Heart left ventricle (tissue), 16 donors: ENCODE measurements at regions of chr3 and their contacts with region 1.

Region 1: GRCh38 chr3:167929968-167930367 is 165.8 kb downstream of the GOLIM4 start:
- DNase-seq: peak in 1 of 5 donors; percentile 24
- ATAC-seq: peak in 3 of 4 donors; percentile 60 to 75 (median 63)
- H3K4me3 ChIP-seq: no peak overlapping the region
- H3K27ac ChIP-seq: no peak overlapping the region
- H3K4me1 ChIP-seq: peaks cover 0 to 10% (median 0%) of the 10 kb centered on the region in 12 donors
- H3K27me3 ChIP-seq: no peaks in the 10 kb centered on the region
- CTCF ChIP-seq: no peak
- POLR2A ChIP-seq: no peak

Region 2: DNA sequence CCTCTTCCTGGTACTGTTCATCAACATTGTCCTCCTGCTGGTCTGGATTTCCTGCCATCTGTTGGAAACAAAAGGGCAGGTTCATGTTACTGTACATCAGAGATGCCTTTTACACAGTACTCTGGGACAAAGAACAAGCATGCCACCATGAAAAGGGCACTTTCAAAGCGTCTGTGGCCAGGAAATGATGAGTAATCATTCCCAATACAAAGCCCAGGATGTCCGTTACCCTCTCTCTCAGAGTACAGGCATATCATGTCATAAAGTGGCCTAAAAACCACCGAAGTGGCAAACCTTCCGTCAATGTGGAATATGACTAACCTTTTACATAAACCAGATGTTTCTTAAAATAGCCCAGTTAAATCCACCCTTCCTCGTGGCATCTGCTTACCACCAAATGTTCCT is 94.6 kb after region 1 on chr3:
- intact Hi-C with region 1: loop called in 1 of 10 experiments (anchors 10 kb)
- DNase-seq: peak in 2 of 5 donors; percentile 19 to 44
- ATAC-seq: peak; percentile 79 to 94 (median 86)
- H3K4me3 ChIP-seq: no peak overlapping the region
- H3K27ac ChIP-seq: peak overlapping the region; percentile 4 to 83 (median 78)
- H3K4me1 ChIP-seq: peaks cover 0 to 39% (median 16%) of the 10 kb centered on the region in 12 donors
- H3K27me3 ChIP-seq: no peaks in the 10 kb centered on the region
- CTCF ChIP-seq: no peak
- POLR2A ChIP-seq: no peak

Region 3: GRCh38 chr3:168034152-168034928 is 104.4 kb after region 1 on chr3:
- intact Hi-C with region 1: loop called in 4 of 10 experiments (anchors 2 to 10 kb)
- DNase-seq: peak in 2 of 5 donors; percentile 41 to 51
- ATAC-seq: peak; percentile 65 to 90 (median 88)
- H3K4me3 ChIP-seq: no peak overlapping the region
- H3K27ac ChIP-seq: peak overlapping the region; percentile 19 to 83 (median 66)
- H3K4me1 ChIP-seq: peaks cover 0 to 14% (median 8%) of the 10 kb centered on the region in 12 donors
- H3K27me3 ChIP-seq: no peaks in the 10 kb centered on the region
- CTCF ChIP-seq: no peak
- POLR2A ChIP-seq: no peak

Region 4: DNA sequence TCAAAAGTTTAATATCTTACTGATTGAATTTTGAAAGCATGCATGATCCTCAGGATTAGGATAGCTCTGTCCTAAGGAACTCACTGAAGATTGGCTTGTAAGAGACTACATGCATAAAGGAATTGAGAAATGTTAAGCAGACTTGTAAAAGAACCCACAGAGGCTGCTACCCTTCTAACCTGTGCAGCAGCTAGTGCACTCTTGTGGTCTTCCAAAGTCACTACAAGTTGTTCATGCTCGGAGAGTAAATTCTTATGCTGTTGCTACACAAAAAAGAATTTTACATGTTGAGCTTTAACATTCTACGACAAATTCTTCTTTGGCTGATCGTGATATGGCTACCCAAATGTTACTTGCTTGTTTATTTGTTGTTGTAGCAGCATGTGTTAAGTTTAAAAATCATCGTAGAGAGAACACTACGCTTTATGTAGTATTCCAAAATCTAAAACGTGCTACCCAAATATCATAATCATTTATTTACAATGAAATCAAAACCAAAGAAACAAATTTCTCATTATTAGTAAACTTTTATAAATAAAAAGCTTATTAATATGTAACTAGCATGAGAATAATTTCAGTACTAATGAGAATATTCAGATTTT is 110.7 kb after region 1 on chr3:
- intact Hi-C with region 1: loop called (anchors 1 to 10 kb)
- DNase-seq: no peak
- ATAC-seq: peak in 3 of 4 donors; percentile 75 to 81 (median 81)
- H3K4me3 ChIP-seq: no peak overlapping the region
- H3K27ac ChIP-seq: no peak overlapping the region
- H3K4me1 ChIP-seq: peaks cover 0 to 24% (median 10%) of the 10 kb centered on the region in 12 donors
- H3K27me3 ChIP-seq: no peaks in the 10 kb centered on the region
- CTCF ChIP-seq: peak; percentile 54 to 73 (median 62)
- POLR2A ChIP-seq: no peak

Region 5: GRCh38 chr3:168047190-168047795 is 117.3 kb after region 1 on chr3:
- intact Hi-C with region 1: loop called in 3 of 10 experiments (anchors 5 to 10 kb)
- DNase-seq: no peak
- ATAC-seq: peak; percentile 33 to 67 (median 64)
- H3K4me3 ChIP-seq: no peak overlapping the region
- H3K27ac ChIP-seq: no peak overlapping the region
- H3K4me1 ChIP-seq: peaks cover 0 to 62% (median 34%) of the 10 kb centered on the region in 12 donors
- H3K27me3 ChIP-seq: no peaks in the 10 kb centered on the region
- CTCF ChIP-seq: peak; percentile 67 to 96 (median 90)
- POLR2A ChIP-seq: no peak